ENCODE measurements at regions of chr1 and their contacts with region 1.

Region 1: GRCh38 chr1:236394905-236395780 is 1.1 kb downstream of the EDARADD start:
- DNase-seq: peak; percentile 56 to 87 (median 67)
- ATAC-seq: peak; percentile 85
- H3K4me3 ChIP-seq: peak overlapping the region; percentile 81
- H3K27ac ChIP-seq: peak overlapping the region; percentile 84
- H3K4me1 ChIP-seq: peaks cover 20 to 31% of the 10 kb centered on the region in 2 experiments
- H3K27me3 ChIP-seq: no peaks in the 10 kb centered on the region
- CTCF ChIP-seq: no peak
- EP300 ChIP-seq: no peak
- POLR2A ChIP-seq: peak; percentile 87
- RAD21 ChIP-seq: no peak

Region 2: GRCh38 chr1:236281654-236282424 is 113.3 kb before region 1 on chr1 and contains the start of gene ERO1B:
- CTCF ChIA-PET with region 1: no interaction called
- POLR2A ChIA-PET with region 1: interaction called, 7 read pairs
- in situ Hi-C with region 1: no loop called
- intact Hi-C with region 1: loop called (anchors 5 kb)
- DNase-seq: peak; percentile 97 to 100 (median 98)
- ATAC-seq: peak; percentile 98
- H3K4me3 ChIP-seq: peak within 1 kb of the TSS; percentile 79
- H3K27ac ChIP-seq: peak within 1 kb of the TSS; percentile 74
- H3K4me1 ChIP-seq: peaks cover 13 to 23% of the 10 kb centered on the region in 2 experiments; a peak in 4 of 5 replicates
- H3K27me3 ChIP-seq: no peaks in the 10 kb centered on the region
- CTCF ChIP-seq: peak in 1 of 3 experiments; percentile 7; a peak in 1 of 6 replicates
- EP300 ChIP-seq: no peak
- POLR2A ChIP-seq: peak; percentile 87
- RAD21 ChIP-seq: no peak
- polyA plus RNA-seq, gene ERO1B: 2.3 TPM

Region 3: GRCh38 chr1:236354330-236355147 is 40.6 kb before region 1 on chr1:
- CTCF ChIA-PET with region 1: no interaction called
- POLR2A ChIA-PET with region 1: interaction called, 4 read pairs
- in situ Hi-C with region 1: no loop called
- intact Hi-C with region 1: loop called (anchors 1 kb)
- DNase-seq: peak in 2 of 4 experiments; percentile 66 to 74
- ATAC-seq: peak; percentile 22
- H3K4me3 ChIP-seq: no peak overlapping the region
- H3K27ac ChIP-seq: peak overlapping the region; percentile 47; the same call in 2 of the 3 replicates
- H3K4me1 ChIP-seq: peaks cover 28 to 55% of the 10 kb centered on the region in 2 experiments
- H3K27me3 ChIP-seq: no peaks in the 10 kb centered on the region
- CTCF ChIP-seq: no peak
- EP300 ChIP-seq: peak; percentile 54; the same call in 1 of the 2 replicates
- POLR2A ChIP-seq: 0 out of 2 replicates have a peak, but pooled peaks have one; percentile 20
- RAD21 ChIP-seq: no peak

Region 4: GRCh38 chr1:236377832-236378535 is 17.2 kb before region 1 on chr1:
- CTCF ChIA-PET with region 1: no interaction called
- POLR2A ChIA-PET with region 1: interaction called, 14 read pairs
- in situ Hi-C with region 1: no loop called
- intact Hi-C with region 1: no loop called
- DNase-seq: no peak
- ATAC-seq: peak; percentile 35; the same call in 2 of the 3 replicates
- H3K4me3 ChIP-seq: no peak overlapping the region
- H3K27ac ChIP-seq: no peak overlapping the region
- H3K4me1 ChIP-seq: no peaks in the 10 kb centered on the region
- H3K27me3 ChIP-seq: no peaks in the 10 kb centered on the region
- CTCF ChIP-seq: no peak
- EP300 ChIP-seq: no peak
- POLR2A ChIP-seq: no peak
- RAD21 ChIP-seq: no peak

Region 5: GRCh38 chr1:236407059-236407458 is 11.9 kb after region 1 on chr1:
- CTCF ChIA-PET with region 1: no interaction called
- POLR2A ChIA-PET with region 1: interaction called, 47 read pairs
- in situ Hi-C with region 1: no loop called
- intact Hi-C with region 1: no loop called
- DNase-seq: no peak
- ATAC-seq: 0 out of 3 replicates have a peak, but pooled peaks have one; percentile 13
- H3K4me3 ChIP-seq: no peak overlapping the region
- H3K27ac ChIP-seq: no peak overlapping the region
- H3K4me1 ChIP-seq: peaks cover 0 to 5% of the 10 kb centered on the region in 2 experiments; a peak in 2 of 5 replicates
- H3K27me3 ChIP-seq: no peaks in the 10 kb centered on the region
- CTCF ChIP-seq: no peak
- EP300 ChIP-seq: no peak
- POLR2A ChIP-seq: no peak
- RAD21 ChIP-seq: no peak

Region 6: GRCh38 chr1:236413688-236414087 is 18.5 kb after region 1 on chr1:
- CTCF ChIA-PET with region 1: no interaction called
- POLR2A ChIA-PET with region 1: interaction called, 47 read pairs
- in situ Hi-C with region 1: no loop called
- intact Hi-C with region 1: no loop called
- DNase-seq: no peak
- ATAC-seq: no peak
- H3K4me3 ChIP-seq: no peak overlapping the region
- H3K27ac ChIP-seq: no peak overlapping the region
- H3K4me1 ChIP-seq: peaks cover 0 to 7% of the 10 kb centered on the region in 2 experiments; a peak in 3 of 5 replicates
- H3K27me3 ChIP-seq: no peaks in the 10 kb centered on the region
- CTCF ChIP-seq: no peak
- EP300 ChIP-seq: no peak
- POLR2A ChIP-seq: no peak
- RAD21 ChIP-seq: no peak

Measured in K562 (cell line).